ENCODE measurements at regions of chr5 and their contacts with region 1.

Region 1: DNA sequence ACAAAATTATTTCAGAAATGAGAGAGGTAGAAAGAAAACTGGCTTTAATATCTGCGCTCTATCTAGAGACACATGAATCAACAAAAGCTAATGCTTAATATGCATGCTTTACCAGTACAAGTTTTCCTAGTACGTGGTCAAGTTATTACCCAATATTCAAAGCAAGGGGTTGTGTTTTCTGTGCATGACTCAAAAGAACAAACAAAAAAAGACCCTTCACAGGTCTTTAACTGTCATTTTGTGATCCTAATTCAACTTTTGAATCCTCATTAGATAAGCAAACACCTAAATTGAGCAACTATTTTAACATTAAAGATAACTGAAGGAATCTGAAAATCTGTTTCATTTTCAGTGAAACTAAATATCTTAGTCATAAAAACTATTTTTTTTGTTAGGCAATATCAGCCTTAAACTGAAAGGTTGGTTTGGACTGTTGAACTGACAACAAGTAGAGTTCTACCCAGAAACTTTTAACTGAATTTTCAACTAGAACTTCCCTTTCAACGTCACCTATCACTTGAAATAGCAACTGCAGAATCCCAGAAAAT is 12.5 kb downstream of the ST8SIA4 start:
- DNase-seq: no peak
- ATAC-seq: peak in 2 of 8 donors; percentile 47 to 53
- H3K4me3 ChIP-seq: peak overlapping the region; percentile 4 to 48 (median 38)
- H3K27ac ChIP-seq: peak overlapping the region; percentile 1 to 80 (median 63)
- H3K4me1 ChIP-seq: peaks cover 0 to 45% (median 0%) of the 10 kb centered on the region in 9 donors
- H3K27me3 ChIP-seq: no peaks in the 10 kb centered on the region
- CTCF ChIP-seq: no peak

Region 2: DNA sequence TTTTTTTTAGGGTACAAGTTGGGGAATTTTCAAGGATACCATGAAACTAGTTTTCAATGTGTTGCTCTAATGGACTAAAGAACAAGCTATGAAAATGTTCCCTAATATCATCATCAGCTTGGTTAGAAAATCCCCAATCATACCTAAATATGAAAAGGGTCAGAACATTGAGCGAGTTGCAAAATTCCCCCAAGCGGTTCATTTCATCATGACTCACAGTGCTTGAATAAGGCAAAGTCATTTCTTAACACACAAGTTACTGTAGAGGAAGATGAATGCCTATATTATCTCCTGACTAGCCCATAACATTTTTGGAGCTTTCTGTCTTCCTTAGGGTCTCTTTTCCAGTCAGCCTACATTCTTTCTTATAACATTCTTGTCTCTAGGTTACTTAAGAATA is 50.2 kb before region 1 on chr5:
- intact Hi-C with region 1: loop called in 1 of 10 experiments (anchors 5 kb)
- DNase-seq: no peak
- ATAC-seq: no peak
- H3K4me3 ChIP-seq: no peak overlapping the region
- H3K27ac ChIP-seq: peak overlapping the region in 4 of 10 donors; percentile 2 to 65 (median 54)
- H3K4me1 ChIP-seq: peaks cover 0 to 56% (median 14%) of the 10 kb centered on the region in 9 donors
- H3K27me3 ChIP-seq: no peaks in the 10 kb centered on the region
- CTCF ChIP-seq: no peak

Measured in heart right ventricle (tissue), 16 donors.